ENCODE measurements at regions of chr7 and their contacts with region 1.

Region 1: DNA sequence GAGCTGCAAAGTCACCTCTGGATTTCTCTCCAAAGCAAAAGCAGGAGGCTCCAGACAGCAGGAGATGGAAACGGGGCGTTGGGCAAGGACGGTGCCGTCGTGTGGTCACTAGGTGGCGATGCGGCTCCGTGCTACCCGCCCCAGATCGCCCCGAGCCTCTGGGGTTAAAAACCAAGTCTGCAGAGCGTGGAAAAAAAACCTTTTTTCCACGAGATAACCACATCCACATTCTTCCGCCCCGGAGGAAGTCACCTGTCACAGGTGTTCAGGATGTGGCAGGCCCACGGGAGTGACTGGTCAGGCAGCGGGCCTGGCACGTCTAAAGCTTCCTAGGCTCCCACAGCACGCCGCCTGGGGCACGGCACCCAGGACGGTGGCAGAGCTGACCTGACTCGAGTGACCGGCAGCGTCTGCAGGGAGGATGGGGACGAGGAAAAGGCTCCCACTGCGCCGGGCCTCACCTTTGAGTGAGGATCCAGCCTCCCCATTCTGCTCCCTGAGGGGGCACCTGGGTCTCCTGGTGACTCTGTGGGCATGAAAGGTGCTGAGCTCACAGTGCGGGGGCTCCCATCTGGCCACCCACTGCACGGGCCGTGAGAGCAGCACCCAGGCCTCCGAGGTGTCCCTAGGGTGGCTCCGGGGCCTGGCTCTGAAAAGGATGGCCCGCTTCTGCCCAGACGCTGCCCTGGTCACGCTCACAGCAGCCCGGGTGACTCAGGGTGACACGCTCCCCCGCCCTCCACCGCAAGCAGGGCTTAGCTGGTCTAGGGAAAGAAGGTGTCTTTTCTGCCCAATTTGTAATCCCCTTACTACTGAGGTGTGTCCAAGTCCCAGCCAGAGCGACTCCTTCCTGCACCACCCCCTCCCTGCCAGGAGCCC is 71.3 kb upstream of the TNRC18 start:
- DNase-seq: no peak
- H3K4me3 ChIP-seq: peak overlapping the region in 3 of 4 donors; percentile 32 to 56 (median 35)
- H3K27ac ChIP-seq: peak overlapping the region; percentile 20 to 76 (median 54)
- H3K4me1 ChIP-seq: peaks cover 12 to 41% (median 29%) of the 10 kb centered on the region in 3 donors
- H3K27me3 ChIP-seq: no peaks in the 10 kb centered on the region
- CTCF ChIP-seq: peak; percentile 86 to 98 (median 93)
- POLR2A ChIP-seq: no peak

Region 2: GRCh38 chr7:5314864-5315263 is 180.1 kb before region 1 on chr7:
- intact Hi-C with region 1: no loop called
- DNase-seq: no peak
- H3K4me3 ChIP-seq: no peak overlapping the region
- H3K27ac ChIP-seq: no peak overlapping the region
- H3K4me1 ChIP-seq: no peaks in the 10 kb centered on the region
- H3K27me3 ChIP-seq: no peaks in the 10 kb centered on the region
- CTCF ChIP-seq: no peak
- POLR2A ChIP-seq: no peak

Region 3: DNA sequence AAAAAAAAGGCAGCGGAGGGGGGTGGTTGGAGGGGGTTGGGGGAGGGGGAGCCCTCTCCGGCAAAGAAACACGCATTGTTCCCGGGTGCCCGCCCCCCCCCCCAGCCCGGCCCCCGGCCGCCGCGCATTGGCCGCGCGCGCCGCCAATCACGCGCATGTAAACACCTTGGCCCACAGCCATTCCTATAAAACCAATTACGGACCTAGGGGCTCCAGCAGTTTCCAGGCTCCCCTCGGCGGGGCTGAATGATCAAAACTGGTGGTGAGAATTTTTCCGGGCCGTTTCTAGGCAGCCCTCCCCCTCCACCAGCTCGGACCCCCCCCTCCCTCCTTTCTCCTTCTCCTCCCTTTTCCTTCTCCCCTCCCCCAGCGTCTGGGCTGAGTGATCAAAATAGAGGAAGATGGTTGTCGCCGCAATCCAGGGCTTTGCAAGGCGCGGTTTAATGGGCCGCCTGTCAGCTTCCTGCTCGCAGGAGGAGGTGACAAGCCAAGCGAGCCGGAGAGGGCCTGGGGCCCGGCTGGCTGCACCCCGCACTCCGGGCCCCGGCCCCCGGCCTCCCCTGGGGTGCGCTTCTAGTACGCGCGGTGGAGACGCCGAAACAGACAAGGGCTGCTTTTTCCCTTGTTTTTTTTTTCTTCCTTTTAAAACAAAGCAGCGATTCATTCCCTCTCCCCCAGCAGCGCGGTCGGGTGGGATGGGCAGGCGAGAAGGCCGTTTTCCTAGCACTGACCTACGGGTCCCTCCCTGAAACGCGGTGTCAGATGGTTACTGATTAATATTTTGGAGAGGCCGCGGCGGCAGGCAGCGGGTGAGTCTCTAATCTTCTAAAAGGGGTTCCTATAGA is 70.9 kb before region 1 on chr7:
- intact Hi-C with region 1: no loop called
- DNase-seq: peak; percentile 69
- H3K4me3 ChIP-seq: peak overlapping the region; percentile 80 to 97 (median 90)
- H3K27ac ChIP-seq: peak overlapping the region; percentile 99 to 100 (median 100)
- H3K4me1 ChIP-seq: peaks cover 6 to 35% (median 9%) of the 10 kb centered on the region in 3 donors
- H3K27me3 ChIP-seq: peaks cover 0 to 18% (median 0%) of the 10 kb centered on the region in 4 donors
- CTCF ChIP-seq: no peak
- POLR2A ChIP-seq: peak in 2 of 4 donors; percentile 73 to 76

Region 4: DNA sequence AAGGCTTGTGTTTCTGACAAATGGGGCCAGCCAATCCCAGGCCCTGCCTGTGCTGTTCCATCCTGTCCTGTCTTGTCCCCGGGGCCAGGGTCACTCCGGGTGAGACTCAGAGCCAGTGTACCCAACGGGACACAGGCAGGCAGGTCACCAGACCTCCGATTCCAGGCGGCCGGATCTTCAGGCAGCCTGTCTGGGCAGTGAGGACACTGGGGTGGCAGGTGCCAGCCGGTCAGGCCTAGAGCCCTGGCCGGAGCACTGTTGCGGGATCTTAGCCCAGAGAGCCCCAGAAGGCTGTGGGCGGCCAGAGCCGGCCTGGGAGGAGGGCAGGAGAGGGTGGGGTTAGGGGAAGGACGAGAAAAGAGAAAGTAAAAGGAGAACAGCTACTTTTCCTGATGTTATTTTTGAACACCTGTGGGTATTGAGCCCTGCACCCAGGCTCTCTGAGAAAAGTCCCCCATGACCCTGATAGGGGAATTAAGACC is 63.0 kb after region 1 on chr7:
- intact Hi-C with region 1: loop called (anchors 2 kb)
- DNase-seq: no peak
- H3K4me3 ChIP-seq: peak overlapping the region in 3 of 4 donors; percentile 18 to 83 (median 77)
- H3K27ac ChIP-seq: peak overlapping the region; percentile 98 to 100 (median 99)
- H3K4me1 ChIP-seq: peaks cover 45 to 77% (median 50%) of the 10 kb centered on the region in 3 donors
- H3K27me3 ChIP-seq: peaks cover 0 to 9% (median 0%) of the 10 kb centered on the region in 4 donors
- CTCF ChIP-seq: peak in 1 of 6 experiments; percentile 4
- POLR2A ChIP-seq: no peak

Region 5: DNA sequence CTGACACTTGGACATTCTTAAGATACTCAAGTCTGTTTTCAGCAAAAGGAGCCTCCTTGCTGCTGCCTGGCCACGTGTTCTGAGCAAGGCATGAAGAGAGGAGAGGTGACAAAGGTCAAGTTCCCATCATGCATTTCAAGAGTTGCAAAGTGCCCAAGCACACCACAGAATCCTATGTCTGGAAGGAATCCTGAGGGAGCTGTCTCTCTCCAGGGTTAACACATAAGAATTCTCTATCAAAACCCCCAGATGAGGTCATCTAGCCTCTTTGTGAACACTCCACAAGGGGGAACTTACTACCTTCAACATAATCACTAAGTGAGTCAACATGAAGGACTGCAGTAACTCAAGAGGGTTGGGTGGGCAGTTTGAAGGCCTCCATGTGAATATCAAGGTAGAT is 131.0 kb after region 1 on chr7:
- intact Hi-C with region 1: no loop called
- DNase-seq: no peak
- H3K4me3 ChIP-seq: no peak overlapping the region
- H3K27ac ChIP-seq: peak overlapping the region in 2 of 4 donors; percentile 29 to 44
- H3K4me1 ChIP-seq: peaks cover 0 to 35% (median 14%) of the 10 kb centered on the region in 3 donors
- H3K27me3 ChIP-seq: no peaks in the 10 kb centered on the region
- CTCF ChIP-seq: no peak
- POLR2A ChIP-seq: no peak

Region 6: GRCh38 chr7:5677538-5678294 is 182.8 kb after region 1 on chr7:
- intact Hi-C with region 1: loop called (anchors 10 kb)
- DNase-seq: no peak
- H3K4me3 ChIP-seq: no peak overlapping the region
- H3K27ac ChIP-seq: peak overlapping the region; percentile 6 to 78 (median 68)
- H3K4me1 ChIP-seq: peaks cover 0 to 77% (median 20%) of the 10 kb centered on the region in 3 donors
- H3K27me3 ChIP-seq: no peaks in the 10 kb centered on the region
- CTCF ChIP-seq: peak; percentile 18 to 68 (median 61)
- POLR2A ChIP-seq: no peak

Region 7: GRCh38 chr7:5704534-5704922 is 209.6 kb after region 1 on chr7:
- intact Hi-C with region 1: loop called (anchors 10 kb)
- DNase-seq: no peak
- H3K4me3 ChIP-seq: no peak overlapping the region
- H3K27ac ChIP-seq: peak overlapping the region in 3 of 4 donors; percentile 47 to 87 (median 81)
- H3K4me1 ChIP-seq: peaks cover 5 to 34% (median 13%) of the 10 kb centered on the region in 3 donors
- H3K27me3 ChIP-seq: no peaks in the 10 kb centered on the region
- CTCF ChIP-seq: peak; percentile 80 to 94 (median 88)
- POLR2A ChIP-seq: no peak